Natural killer cell (primary cell): ENCODE measurements at regions of chr2 and their contacts with region 1.

Region 1: DNA sequence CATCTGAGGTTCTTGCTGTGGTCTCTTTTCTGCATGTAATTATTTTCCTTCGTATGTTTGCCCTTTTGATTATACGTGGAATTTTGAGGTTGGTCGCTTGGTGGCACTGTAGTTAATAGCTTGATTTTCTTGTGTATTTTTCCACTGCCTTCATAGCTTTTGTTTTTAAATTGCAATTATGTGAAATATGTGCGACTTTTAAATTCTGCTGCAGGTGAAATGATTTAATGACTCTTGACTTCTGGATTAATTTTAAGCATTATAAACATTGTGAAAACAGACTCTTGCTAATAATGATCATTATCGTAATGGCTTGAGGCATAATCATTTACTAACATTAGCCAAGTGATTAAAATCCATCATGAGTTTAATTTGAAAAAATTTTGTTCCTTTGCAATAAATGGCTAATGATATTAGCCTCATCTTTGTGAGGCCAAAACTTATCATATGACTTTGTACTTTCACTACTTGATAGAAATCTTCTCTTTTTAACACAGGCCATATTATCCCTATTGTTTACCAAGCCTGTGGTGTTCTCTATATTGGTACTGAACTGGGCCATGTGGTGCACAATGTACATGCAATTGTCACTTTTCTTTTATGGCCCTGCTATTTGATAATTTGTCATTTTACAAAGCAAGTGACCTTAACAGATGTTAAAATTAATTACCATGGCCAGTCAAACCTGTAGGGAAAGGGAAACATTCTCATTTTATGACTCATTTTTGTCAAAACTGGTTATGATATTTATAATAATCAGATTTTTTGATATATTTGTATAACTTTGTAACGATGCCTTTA is 62.8 kb upstream of the NEUROD1 start:
- DNase-seq: peak in 1 of 2 donors; percentile 64
- ATAC-seq: peak in 1 of 3 donors; percentile 48
- H3K4me3 ChIP-seq: no peak overlapping the region
- H3K4me3 Mint-ChIP-seq: no peak overlapping the region
- H3K27ac ChIP-seq: no peak overlapping the region
- H3K27ac Mint-ChIP-seq: no peak overlapping the region
- H3K4me1 ChIP-seq: no peaks in the 10 kb centered on the region
- H3K4me1 Mint-ChIP-seq: no peaks in the 10 kb centered on the region
- H3K27me3 ChIP-seq: no peaks in the 10 kb centered on the region
- H3K27me3 Mint-ChIP-seq: peaks cover 3 to 8% of the 10 kb centered on the region in 2 donors
- CTCF ChIP-seq: peak; percentile 52

Region 2: GRCh38 chr2:181546008-181546407 is 197.1 kb before region 1 on chr2:
- intact Hi-C with region 1: no loop called
- DNase-seq: no peak
- ATAC-seq: no peak
- H3K4me3 ChIP-seq: no peak overlapping the region
- H3K4me3 Mint-ChIP-seq: no peak overlapping the region
- H3K27ac ChIP-seq: no peak overlapping the region
- H3K27ac Mint-ChIP-seq: no peak overlapping the region
- H3K4me1 ChIP-seq: no peaks in the 10 kb centered on the region
- H3K4me1 Mint-ChIP-seq: no peaks in the 10 kb centered on the region
- H3K27me3 ChIP-seq: no peaks in the 10 kb centered on the region
- H3K27me3 Mint-ChIP-seq: no peaks in the 10 kb centered on the region
- CTCF ChIP-seq: no peak

Region 3: GRCh38 chr2:181861379-181861778 is 118.3 kb after region 1 on chr2:
- intact Hi-C with region 1: no loop called
- DNase-seq: no peak
- ATAC-seq: no peak
- H3K4me3 ChIP-seq: no peak overlapping the region
- H3K4me3 Mint-ChIP-seq: no peak overlapping the region
- H3K27ac ChIP-seq: no peak overlapping the region
- H3K27ac Mint-ChIP-seq: no peak overlapping the region
- H3K4me1 ChIP-seq: no peaks in the 10 kb centered on the region
- H3K4me1 Mint-ChIP-seq: no peaks in the 10 kb centered on the region
- H3K27me3 ChIP-seq: peaks cover 2% of the 10 kb centered on the region
- H3K27me3 Mint-ChIP-seq: peaks cover 8% of the 10 kb centered on the region in 2 donors
- CTCF ChIP-seq: no peak

Region 4: DNA sequence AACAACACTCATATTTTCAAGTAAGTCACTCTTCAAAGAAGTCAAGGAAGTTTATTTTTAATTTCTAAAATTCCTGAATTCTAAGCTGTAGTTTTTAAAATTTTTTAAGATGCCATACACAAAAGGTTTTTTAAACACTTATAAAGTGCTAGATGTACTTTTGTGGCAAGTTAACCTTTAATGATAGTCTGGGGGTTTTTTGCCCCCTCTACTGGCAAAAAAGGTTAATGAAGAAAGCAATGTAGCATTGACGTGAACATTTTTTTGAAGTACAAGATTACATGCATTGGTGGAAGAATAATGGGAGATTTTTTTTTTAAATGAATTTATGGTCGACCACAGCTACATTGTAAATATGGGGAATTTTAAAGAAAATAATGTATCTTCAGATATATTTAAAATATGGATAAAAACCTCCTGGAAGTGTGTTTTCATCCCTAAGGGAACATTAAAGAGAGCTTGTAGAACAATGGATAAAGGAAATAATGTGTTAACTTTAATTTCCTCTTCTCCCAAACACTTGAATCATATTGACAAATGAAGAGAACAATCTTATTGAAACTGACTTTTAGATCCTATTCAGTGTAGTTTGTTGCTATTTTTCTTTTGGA is 161.0 kb after region 1 on chr2:
- intact Hi-C with region 1: loop called (anchors 2 kb)
- DNase-seq: peak in 1 of 2 donors; percentile 64
- ATAC-seq: peak in 2 of 3 donors; percentile 43 to 53
- H3K4me3 ChIP-seq: no peak overlapping the region
- H3K4me3 Mint-ChIP-seq: no peak overlapping the region
- H3K27ac ChIP-seq: no peak overlapping the region
- H3K27ac Mint-ChIP-seq: no peak overlapping the region
- H3K4me1 ChIP-seq: no peaks in the 10 kb centered on the region
- H3K4me1 Mint-ChIP-seq: peaks cover 5 to 19% of the 10 kb centered on the region in 2 donors
- H3K27me3 ChIP-seq: no peaks in the 10 kb centered on the region
- H3K27me3 Mint-ChIP-seq: no peaks in the 10 kb centered on the region
- CTCF ChIP-seq: peak; percentile 67

Region 5: DNA sequence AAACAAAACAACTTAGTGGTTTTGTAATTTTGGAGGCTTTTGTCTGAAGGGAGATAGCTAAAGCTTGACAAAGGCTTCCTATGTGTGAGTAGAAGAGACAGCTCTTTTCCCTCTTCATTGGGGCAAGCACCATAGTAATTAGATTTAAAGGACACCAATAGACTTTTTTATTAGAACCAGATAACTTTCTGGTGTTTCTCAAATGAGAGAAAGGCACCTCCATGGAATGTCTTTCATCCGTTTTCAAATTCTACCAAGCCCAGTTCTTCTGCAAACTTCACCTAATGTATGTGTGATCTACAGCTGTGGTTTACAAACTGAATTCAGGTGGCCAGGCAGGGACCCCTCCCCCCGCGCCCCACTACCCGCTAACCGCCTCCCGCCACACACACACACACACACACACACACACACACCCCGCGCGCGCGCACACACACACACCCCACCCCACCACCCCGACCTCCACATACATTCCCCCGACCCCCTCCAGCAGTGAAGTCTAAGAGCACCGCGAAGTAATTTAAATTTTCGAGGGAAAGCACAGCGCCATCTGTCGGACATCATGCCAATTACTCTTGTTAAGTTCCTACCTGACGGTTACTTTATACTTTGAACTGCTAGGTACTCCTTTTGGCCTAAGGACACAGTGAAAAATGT is 210.9 kb after region 1 on chr2:
- intact Hi-C with region 1: loop called (anchors 5 kb)
- DNase-seq: peak; percentile 53 to 81
- ATAC-seq: peak; percentile 73 to 89 (median 76)
- H3K4me3 ChIP-seq: no peak overlapping the region
- H3K4me3 Mint-ChIP-seq: peak overlapping the region; percentile 48
- H3K27ac ChIP-seq: no peak overlapping the region
- H3K27ac Mint-ChIP-seq: no peak overlapping the region
- H3K4me1 ChIP-seq: peaks cover 3% of the 10 kb centered on the region
- H3K4me1 Mint-ChIP-seq: peaks cover 9 to 15% of the 10 kb centered on the region in 2 donors
- H3K27me3 ChIP-seq: no peaks in the 10 kb centered on the region
- H3K27me3 Mint-ChIP-seq: peaks cover 2 to 17% of the 10 kb centered on the region in 2 donors
- CTCF ChIP-seq: peak; percentile 62

Region 6: DNA sequence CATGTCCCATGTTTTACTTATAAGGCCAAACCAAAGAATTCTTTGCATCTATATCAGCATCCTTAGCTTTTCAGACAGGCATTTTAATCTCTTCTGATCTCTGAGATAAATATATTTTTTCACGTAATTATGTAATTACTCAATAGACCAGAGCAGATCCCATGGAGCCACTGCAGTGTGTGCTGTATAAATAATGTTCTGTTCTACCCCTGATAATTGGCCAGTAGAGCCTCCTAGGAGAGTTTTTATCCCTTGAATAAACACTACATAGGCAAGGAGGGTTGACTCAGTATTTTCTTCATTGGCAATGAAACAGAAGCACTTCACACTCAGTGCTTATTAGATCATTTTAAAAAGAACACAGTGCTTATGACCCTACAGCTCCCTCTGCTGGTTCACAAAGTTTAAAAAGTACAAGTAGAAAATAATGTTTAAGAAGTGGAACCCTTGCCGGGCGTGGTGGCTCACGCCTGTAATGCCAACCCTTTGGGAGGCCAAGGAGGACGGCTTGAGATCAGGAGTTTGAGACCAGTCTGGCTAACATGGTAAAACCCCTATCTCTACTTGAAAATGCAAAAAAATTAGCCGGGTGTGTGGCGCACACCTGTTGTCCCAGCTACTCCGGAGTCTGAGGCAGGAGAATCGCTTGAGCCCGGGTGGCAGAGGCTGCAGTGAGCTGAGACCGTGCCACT is 334.5 kb after region 1 on chr2:
- intact Hi-C with region 1: loop called (anchors 10 kb)
- DNase-seq: peak in 1 of 2 donors; percentile 43
- ATAC-seq: no peak
- H3K4me3 ChIP-seq: no peak overlapping the region
- H3K4me3 Mint-ChIP-seq: no peak overlapping the region
- H3K27ac ChIP-seq: no peak overlapping the region
- H3K27ac Mint-ChIP-seq: no peak overlapping the region
- H3K4me1 ChIP-seq: no peaks in the 10 kb centered on the region
- H3K4me1 Mint-ChIP-seq: no peaks in the 10 kb centered on the region
- H3K27me3 ChIP-seq: no peaks in the 10 kb centered on the region
- H3K27me3 Mint-ChIP-seq: peaks cover 0 to 9% of the 10 kb centered on the region in 2 donors
- CTCF ChIP-seq: peak; percentile 11

Region 7: GRCh38 chr2:182110347-182110746 is 367.2 kb after region 1 on chr2:
- intact Hi-C with region 1: no loop called
- DNase-seq: no peak
- ATAC-seq: no peak
- H3K4me3 ChIP-seq: no peak overlapping the region
- H3K4me3 Mint-ChIP-seq: no peak overlapping the region
- H3K27ac ChIP-seq: no peak overlapping the region
- H3K27ac Mint-ChIP-seq: no peak overlapping the region
- H3K4me1 ChIP-seq: no peaks in the 10 kb centered on the region
- H3K4me1 Mint-ChIP-seq: no peaks in the 10 kb centered on the region
- H3K27me3 ChIP-seq: no peaks in the 10 kb centered on the region
- H3K27me3 Mint-ChIP-seq: no peaks in the 10 kb centered on the region
- CTCF ChIP-seq: no peak

Region 8: GRCh38 chr2:182980115-182980514 is 1237.0 kb after region 1 on chr2:
- intact Hi-C with region 1: loop called (anchors 5 kb)
- DNase-seq: peak in 1 of 2 donors; percentile 36
- ATAC-seq: peak in 1 of 3 donors; percentile 59
- H3K4me3 ChIP-seq: no peak overlapping the region
- H3K4me3 Mint-ChIP-seq: no peak overlapping the region
- H3K27ac ChIP-seq: no peak overlapping the region
- H3K27ac Mint-ChIP-seq: no peak overlapping the region
- H3K4me1 ChIP-seq: no peaks in the 10 kb centered on the region
- H3K4me1 Mint-ChIP-seq: no peaks in the 10 kb centered on the region
- H3K27me3 ChIP-seq: no peaks in the 10 kb centered on the region
- H3K27me3 Mint-ChIP-seq: no peaks in the 10 kb centered on the region
- CTCF ChIP-seq: peak; percentile 80

Region 9: GRCh38 chr2:183049420-183049819 is 1306.3 kb after region 1 on chr2:
- intact Hi-C with region 1: no loop called
- DNase-seq: no peak
- ATAC-seq: no peak
- H3K4me3 ChIP-seq: no peak overlapping the region
- H3K4me3 Mint-ChIP-seq: no peak overlapping the region
- H3K27ac ChIP-seq: no peak overlapping the region
- H3K27ac Mint-ChIP-seq: no peak overlapping the region
- H3K4me1 ChIP-seq: no peaks in the 10 kb centered on the region
- H3K4me1 Mint-ChIP-seq: no peaks in the 10 kb centered on the region
- H3K27me3 ChIP-seq: no peaks in the 10 kb centered on the region
- H3K27me3 Mint-ChIP-seq: peaks cover 24 to 27% of the 10 kb centered on the region in 2 donors
- CTCF ChIP-seq: no peak